ENCODE measurements at regions of chr3 and their contacts with region 1.

Region 1: GRCh38 chr3:16177962-16178627 is 3.6 kb downstream of the GALNT15 start:
- H3K4me3 Mint-ChIP-seq: no peak overlapping the region
- H3K27ac Mint-ChIP-seq: no peak overlapping the region
- H3K4me1 Mint-ChIP-seq: peaks cover 18% of the 10 kb centered on the region
- H3K27me3 Mint-ChIP-seq: peaks cover 13% of the 10 kb centered on the region

Region 2: GRCh38 chr3:16247276-16248061 is 69.4 kb after region 1 on chr3:
- intact Hi-C with region 1: loop called (anchors 2 kb)
- H3K4me3 Mint-ChIP-seq: no peak overlapping the region
- H3K27ac Mint-ChIP-seq: no peak overlapping the region
- H3K4me1 Mint-ChIP-seq: peaks cover 5% of the 10 kb centered on the region
- H3K27me3 Mint-ChIP-seq: no peaks in the 10 kb centered on the region

Region 3: GRCh38 chr3:17287006-17287689 is 1109.1 kb after region 1 on chr3:
- intact Hi-C with region 1: no loop called
- H3K4me3 Mint-ChIP-seq: no peak overlapping the region
- H3K27ac Mint-ChIP-seq: no peak overlapping the region
- H3K4me1 Mint-ChIP-seq: no peaks in the 10 kb centered on the region
- H3K27me3 Mint-ChIP-seq: no peaks in the 10 kb centered on the region